Psoas muscle (tissue), 8 donors: ENCODE measurements at regions of chr17 and their contacts with region 1.

Region 1: DNA sequence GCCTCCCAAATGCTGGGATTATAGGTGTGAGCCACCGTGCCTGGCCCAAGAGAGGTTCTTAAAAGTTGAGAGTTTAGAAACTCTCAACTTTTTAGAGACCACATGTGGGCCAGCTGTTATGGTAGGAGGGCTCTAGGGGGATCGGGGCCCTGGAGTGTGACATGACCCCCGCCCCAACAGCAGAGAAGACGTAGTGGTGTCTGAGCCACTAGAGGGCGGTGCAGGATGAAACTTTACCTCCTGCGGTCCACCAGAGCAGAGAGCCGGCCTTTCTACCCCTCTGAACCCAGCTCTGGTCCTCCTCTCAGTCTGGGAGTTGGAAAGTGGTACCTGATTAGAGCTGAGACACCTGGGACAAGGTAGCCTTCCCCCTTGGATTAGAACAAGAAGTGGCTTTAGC is 7.4 kb downstream of the CDK5RAP3 start:
- DNase-seq: peak; percentile 38 to 69
- ATAC-seq: peak; percentile 64 to 78 (median 70)
- H3K4me3 ChIP-seq: no peak overlapping the region
- H3K27ac ChIP-seq: no peak overlapping the region
- H3K4me1 ChIP-seq: no peaks in the 10 kb centered on the region
- H3K27me3 ChIP-seq: no peaks in the 10 kb centered on the region
- CTCF ChIP-seq: peak; percentile 65

Region 2: GRCh38 chr17:47785538-47786123 is 192.7 kb before region 1 on chr17:
- intact Hi-C with region 1: no loop called
- DNase-seq: no peak
- ATAC-seq: no peak
- H3K4me3 ChIP-seq: no peak overlapping the region
- H3K27ac ChIP-seq: no peak overlapping the region
- H3K4me1 ChIP-seq: peaks cover 4% of the 10 kb centered on the region
- H3K27me3 ChIP-seq: peaks cover 3 to 42% (median 9%) of the 10 kb centered on the region in 3 donors
- CTCF ChIP-seq: no peak

Region 3: GRCh38 chr17:48016112-48016511 is 37.8 kb after region 1 on chr17:
- intact Hi-C with region 1: loop called (anchors 2 to 5 kb)
- DNase-seq: no peak
- ATAC-seq: no peak
- H3K4me3 ChIP-seq: no peak overlapping the region
- H3K27ac ChIP-seq: no peak overlapping the region
- H3K4me1 ChIP-seq: peaks cover 8% of the 10 kb centered on the region
- H3K27me3 ChIP-seq: peaks cover 0 to 30% (median 8%) of the 10 kb centered on the region in 3 donors
- CTCF ChIP-seq: no peak